ENCODE measurements at regions of chr7 and their contacts with region 1.

Region 1: DNA sequence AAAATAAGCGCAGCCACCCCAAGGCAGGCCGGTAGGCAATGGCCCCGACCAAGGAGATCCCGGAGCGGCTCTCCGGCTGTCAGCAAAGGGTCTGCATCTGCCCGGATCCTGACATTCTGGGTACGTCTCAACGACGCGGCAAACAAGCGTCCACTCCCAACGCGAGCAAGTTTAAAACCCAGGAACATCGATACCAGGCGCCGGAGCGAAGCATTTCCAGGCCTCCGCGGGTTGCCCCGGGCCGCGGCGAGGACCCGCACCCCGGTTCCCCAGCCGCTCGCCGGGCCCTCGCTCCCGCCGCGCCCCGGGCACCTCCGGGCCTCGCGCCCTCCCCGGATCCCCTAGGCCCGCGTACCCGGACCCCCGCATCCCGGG is 453 bp downstream of the URGCP start:
- DNase-seq: peak in 1 of 2 experiments; percentile 59
- H3K4me3 ChIP-seq: peak overlapping the region; percentile 46 to 83 (median 64)
- H3K27ac ChIP-seq: no peak overlapping the region
- H3K4me1 ChIP-seq: peaks cover 1 to 16% (median 10%) of the 10 kb centered on the region in 4 experiments; a peak in 6 of 7 replicates
- H3K27me3 ChIP-seq: no peaks in the 10 kb centered on the region
- CTCF ChIP-seq: no peak
- EP300 ChIP-seq: no peak
- POLR2A ChIP-seq: no peak
- RAD21 ChIP-seq: no peak

Region 2: GRCh38 chr7:43895847-43896415 is 10.0 kb before region 1 on chr7:
- CTCF ChIA-PET with region 1: interaction called, 4 read pairs
- POLR2A ChIA-PET with region 1: interaction called, 13 read pairs
- DNase-seq: no peak
- H3K4me3 ChIP-seq: no peak overlapping the region
- H3K27ac ChIP-seq: no peak overlapping the region
- H3K4me1 ChIP-seq: no peaks in the 10 kb centered on the region
- H3K27me3 ChIP-seq: no peaks in the 10 kb centered on the region
- CTCF ChIP-seq: no peak
- EP300 ChIP-seq: no peak
- POLR2A ChIP-seq: no peak
- RAD21 ChIP-seq: no peak